CD4-positive, alpha-beta T cell (primary cell): ENCODE measurements at regions of chr12 and their contacts with region 1.

Region 1: GRCh38 chr12:65169320-65170208 is at the start of gene LEMD3:
- DNase-seq: peak; percentile 88 to 98 (median 94)
- ATAC-seq: peak; percentile 90
- H3K4me3 ChIP-seq: peak within 1 kb of the TSS; percentile 74
- H3K4me3 Mint-ChIP-seq: peak within 1 kb of the TSS; percentile 99
- H3K27ac ChIP-seq: peak within 1 kb of the TSS; percentile 83 to 88
- H3K27ac Mint-ChIP-seq: peak within 1 kb of the TSS; percentile 99
- H3K4me1 ChIP-seq: peaks cover 24% of the 10 kb centered on the region
- H3K4me1 Mint-ChIP-seq: peaks cover 24% of the 10 kb centered on the region
- H3K27me3 ChIP-seq: no peaks in the 10 kb centered on the region
- H3K27me3 Mint-ChIP-seq: peaks cover 7% of the 10 kb centered on the region
- CTCF ChIP-seq: no peak
- total RNA-seq, gene LEMD3: 67.1 to 68.8 TPM

Region 2: DNA sequence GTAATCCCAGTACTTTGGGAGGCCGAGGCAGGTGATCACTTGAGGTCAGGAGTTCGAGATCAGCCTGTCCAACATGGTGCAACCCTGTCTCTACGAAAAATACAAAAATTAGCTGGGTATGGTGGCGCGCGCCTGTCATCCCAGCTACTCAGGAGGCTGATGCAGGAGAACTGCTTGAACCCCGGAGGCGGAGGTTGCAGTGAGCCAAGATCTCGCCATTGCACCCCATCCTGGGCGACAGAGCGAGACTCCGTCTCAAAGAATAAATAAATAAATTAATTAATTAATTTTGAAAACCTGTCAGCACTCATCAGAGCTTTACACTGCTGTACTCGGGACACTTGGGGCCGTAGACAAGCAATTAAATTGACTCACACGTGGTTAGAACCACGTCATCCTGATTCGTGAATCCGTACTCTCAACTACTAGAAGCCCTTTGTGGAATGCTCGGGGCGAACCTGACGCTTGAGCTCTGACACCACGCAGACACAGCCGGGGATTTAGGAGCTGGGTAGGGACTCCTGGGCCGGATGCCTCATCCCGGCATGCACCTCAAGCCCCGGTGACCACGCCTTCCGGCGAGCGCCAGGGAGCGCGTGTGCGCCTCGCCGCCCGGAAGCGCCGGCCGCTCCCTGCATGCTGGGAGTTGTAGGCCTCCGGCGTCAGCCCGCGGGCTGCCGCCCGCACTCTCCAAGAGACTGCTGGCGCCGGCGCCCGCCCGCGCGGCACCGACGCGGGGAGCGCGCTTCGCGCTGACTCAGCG is 765.7 kb before region 1 on chr12 and contains the start of gene XPOT:
- CTCF ChIA-PET with region 1: no interaction called
- POLR2A ChIA-PET with region 1: interaction called, 5 read pairs
- intact Hi-C with region 1: loop called in 1 of 2 experiments (anchors 5 kb)
- DNase-seq: peak; percentile 82 to 99 (median 91)
- ATAC-seq: peak; percentile 94
- H3K4me3 ChIP-seq: peak within 1 kb of the TSS; percentile 96
- H3K4me3 Mint-ChIP-seq: peak within 1 kb of the TSS; percentile 98
- H3K27ac ChIP-seq: peak within 1 kb of the TSS; percentile 78 to 83
- H3K27ac Mint-ChIP-seq: peak within 1 kb of the TSS; percentile 94
- H3K4me1 ChIP-seq: peaks cover 31% of the 10 kb centered on the region
- H3K4me1 Mint-ChIP-seq: peaks cover 36% of the 10 kb centered on the region
- H3K27me3 ChIP-seq: no peaks in the 10 kb centered on the region
- H3K27me3 Mint-ChIP-seq: no peaks in the 10 kb centered on the region
- CTCF ChIP-seq: no peak
- total RNA-seq, gene XPOT: 39.6 to 40.0 TPM

Region 3: GRCh38 chr12:64522316-64522715 is 647.2 kb before region 1 on chr12:
- CTCF ChIA-PET with region 1: no interaction called
- POLR2A ChIA-PET with region 1: no interaction called
- intact Hi-C with region 1: no loop called
- DNase-seq: no peak
- ATAC-seq: no peak
- H3K4me3 ChIP-seq: no peak overlapping the region
- H3K4me3 Mint-ChIP-seq: no peak overlapping the region
- H3K27ac ChIP-seq: no peak overlapping the region
- H3K27ac Mint-ChIP-seq: no peak overlapping the region
- H3K4me1 ChIP-seq: no peaks in the 10 kb centered on the region
- H3K4me1 Mint-ChIP-seq: no peaks in the 10 kb centered on the region
- H3K27me3 ChIP-seq: no peaks in the 10 kb centered on the region
- H3K27me3 Mint-ChIP-seq: peaks cover 11% of the 10 kb centered on the region
- CTCF ChIP-seq: no peak

Region 4: DNA sequence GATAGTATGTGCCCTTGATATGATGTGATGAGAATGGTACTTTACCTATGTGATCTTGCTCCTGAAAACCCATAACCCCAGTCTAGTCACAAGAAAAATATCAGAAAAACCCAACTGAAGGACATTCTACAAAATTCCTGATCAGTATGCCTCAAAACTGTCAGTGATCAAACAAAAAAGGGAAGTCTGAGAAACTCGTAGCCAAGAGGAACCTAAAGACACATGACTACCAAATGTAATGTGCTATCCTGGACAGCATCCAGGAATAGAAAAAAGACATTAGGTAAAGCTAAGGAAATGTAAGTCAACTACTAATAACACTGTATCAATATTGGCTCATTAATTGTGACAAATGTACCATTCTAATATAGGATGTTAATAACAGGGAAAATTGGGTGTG is 44.3 kb before region 1 on chr12:
- CTCF ChIA-PET with region 1: no interaction called
- POLR2A ChIA-PET with region 1: interaction called, 4 read pairs
- intact Hi-C with region 1: loop called in 1 of 2 experiments (anchors 5 kb)
- DNase-seq: no peak
- ATAC-seq: no peak
- H3K4me3 ChIP-seq: no peak overlapping the region
- H3K4me3 Mint-ChIP-seq: no peak overlapping the region
- H3K27ac ChIP-seq: no peak overlapping the region
- H3K27ac Mint-ChIP-seq: no peak overlapping the region
- H3K4me1 ChIP-seq: peaks cover 12% of the 10 kb centered on the region
- H3K4me1 Mint-ChIP-seq: no peaks in the 10 kb centered on the region
- H3K27me3 ChIP-seq: peaks cover 30 to 42% of the 10 kb centered on the region in 2 experiments
- H3K27me3 Mint-ChIP-seq: peaks cover 33% of the 10 kb centered on the region
- CTCF ChIP-seq: no peak

Region 5: GRCh38 chr12:65182012-65182739 is 12.6 kb after region 1 on chr12:
- CTCF ChIA-PET with region 1: interaction called, 3 read pairs
- POLR2A ChIA-PET with region 1: interaction called, 32 read pairs
- intact Hi-C with region 1: no loop called
- DNase-seq: no peak
- ATAC-seq: no peak
- H3K4me3 ChIP-seq: no peak overlapping the region
- H3K4me3 Mint-ChIP-seq: no peak overlapping the region
- H3K27ac ChIP-seq: no peak overlapping the region
- H3K27ac Mint-ChIP-seq: no peak overlapping the region
- H3K4me1 ChIP-seq: peaks cover 5% of the 10 kb centered on the region
- H3K4me1 Mint-ChIP-seq: peaks cover 68% of the 10 kb centered on the region
- H3K27me3 ChIP-seq: no peaks in the 10 kb centered on the region
- H3K27me3 Mint-ChIP-seq: no peaks in the 10 kb centered on the region
- CTCF ChIP-seq: no peak

Region 6: DNA sequence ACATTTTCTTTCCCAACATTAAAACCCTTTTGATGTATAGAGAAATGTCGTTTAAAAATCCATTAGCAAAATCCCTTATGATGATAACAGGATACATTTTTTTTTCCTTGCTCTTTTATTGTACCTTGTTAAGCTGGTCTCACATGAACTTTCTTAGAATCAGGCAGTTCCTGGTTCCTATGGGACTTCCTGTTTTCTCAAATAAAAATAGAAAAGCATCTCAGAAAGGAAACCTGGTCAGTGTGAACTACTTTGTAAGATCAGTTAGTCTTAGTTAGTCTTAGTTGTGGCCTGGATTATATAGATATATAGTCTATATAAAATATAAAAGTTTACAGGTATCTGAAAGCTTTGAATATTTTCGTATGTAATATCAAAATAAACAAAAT is 40.1 kb after region 1 on chr12:
- CTCF ChIA-PET with region 1: interaction called, 3 read pairs
- POLR2A ChIA-PET with region 1: interaction called, 30 read pairs
- intact Hi-C with region 1: loop called (anchors 5 kb)
- DNase-seq: peak in 3 of 14 experiments; percentile 11 to 43 (median 24)
- ATAC-seq: no peak
- H3K4me3 ChIP-seq: no peak overlapping the region
- H3K4me3 Mint-ChIP-seq: peak overlapping the region; percentile 72
- H3K27ac ChIP-seq: no peak overlapping the region
- H3K27ac Mint-ChIP-seq: peak overlapping the region; percentile 70
- H3K4me1 ChIP-seq: no peaks in the 10 kb centered on the region
- H3K4me1 Mint-ChIP-seq: peaks cover 60% of the 10 kb centered on the region
- H3K27me3 ChIP-seq: no peaks in the 10 kb centered on the region
- H3K27me3 Mint-ChIP-seq: no peaks in the 10 kb centered on the region
- CTCF ChIP-seq: no peak

Region 7: GRCh38 chr12:65740873-65741600 is 571.5 kb after region 1 on chr12:
- CTCF ChIA-PET with region 1: no interaction called
- POLR2A ChIA-PET with region 1: no interaction called
- intact Hi-C with region 1: no loop called
- DNase-seq: peak; percentile 16 to 76 (median 38)
- ATAC-seq: peak; percentile 71
- H3K4me3 ChIP-seq: peak overlapping the region; percentile 40
- H3K4me3 Mint-ChIP-seq: peak overlapping the region; percentile 87
- H3K27ac ChIP-seq: no peak overlapping the region
- H3K27ac Mint-ChIP-seq: peak overlapping the region; percentile 43
- H3K4me1 ChIP-seq: peaks cover 4% of the 10 kb centered on the region
- H3K4me1 Mint-ChIP-seq: peaks cover 14% of the 10 kb centered on the region
- H3K27me3 ChIP-seq: peaks cover 4 to 12% of the 10 kb centered on the region in 2 experiments
- H3K27me3 Mint-ChIP-seq: peaks cover 33% of the 10 kb centered on the region
- CTCF ChIP-seq: no peak

Region 8: DNA sequence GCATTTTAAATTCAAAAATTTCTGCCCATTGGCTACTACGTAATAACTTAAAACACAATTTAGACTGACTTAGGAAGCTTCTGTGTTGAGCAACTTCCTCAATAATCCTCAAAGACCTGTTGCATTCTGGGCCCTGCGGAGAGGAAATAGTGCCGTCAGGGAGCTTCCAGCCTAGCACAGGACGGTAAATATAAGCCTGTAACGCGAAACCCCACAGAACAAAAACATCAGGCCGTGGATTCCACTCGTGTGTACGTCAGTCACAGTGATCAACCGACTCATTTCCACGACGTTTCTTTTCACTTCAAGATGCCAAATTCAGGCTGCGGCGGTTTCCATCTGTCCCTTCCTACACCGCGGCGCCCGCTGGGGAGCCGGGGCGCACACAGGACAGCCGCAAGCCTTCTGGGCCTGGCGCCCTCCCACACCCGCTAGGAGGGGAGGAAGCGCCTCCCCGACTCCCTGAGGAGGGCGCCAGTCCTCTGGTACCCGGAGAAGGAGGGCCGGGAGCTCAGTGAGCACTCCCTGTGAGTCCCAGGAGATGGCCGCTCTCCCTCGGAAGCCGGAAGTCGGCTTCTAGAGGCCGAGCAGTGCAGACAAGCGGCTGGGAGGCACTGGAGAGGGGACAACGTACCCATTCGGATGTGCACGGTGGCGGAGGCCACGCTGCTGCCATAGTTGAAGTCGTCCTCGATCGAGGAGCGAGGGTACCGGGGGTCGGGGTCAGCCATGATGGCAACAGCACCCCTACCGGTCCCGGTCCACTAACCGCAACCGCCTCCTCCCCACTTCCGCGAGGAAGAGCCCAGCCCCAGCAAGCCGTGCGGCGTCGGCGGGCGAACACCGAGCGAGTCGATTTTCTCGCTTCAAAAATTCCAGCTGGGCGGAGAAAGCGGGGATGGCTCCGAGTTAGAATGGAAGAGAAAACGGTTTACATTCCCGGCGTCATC is 999.9 kb after region 1 on chr12 and contains the start of gene TMBIM4:
- CTCF ChIA-PET with region 1: interaction called, 4 read pairs
- POLR2A ChIA-PET with region 1: interaction called, 19 read pairs
- intact Hi-C with region 1: no loop called
- DNase-seq: peak; percentile 64 to 94 (median 77)
- ATAC-seq: peak; percentile 81
- H3K4me3 ChIP-seq: peak within 1 kb of the TSS; percentile 88
- H3K4me3 Mint-ChIP-seq: peak within 1 kb of the TSS; percentile 93
- H3K27ac ChIP-seq: peak within 1 kb of the TSS; percentile 98
- H3K27ac Mint-ChIP-seq: peak within 1 kb of the TSS; percentile 93
- H3K4me1 ChIP-seq: peaks cover 17% of the 10 kb centered on the region
- H3K4me1 Mint-ChIP-seq: peaks cover 57% of the 10 kb centered on the region
- H3K27me3 ChIP-seq: no peaks in the 10 kb centered on the region
- H3K27me3 Mint-ChIP-seq: peaks cover 4% of the 10 kb centered on the region
- CTCF ChIP-seq: peak; percentile 57
- total RNA-seq, gene TMBIM4: 24.1 to 24.2 TPM